ENCODE measurements at regions of chr1 and their contacts with region 1.

Region 1: DNA sequence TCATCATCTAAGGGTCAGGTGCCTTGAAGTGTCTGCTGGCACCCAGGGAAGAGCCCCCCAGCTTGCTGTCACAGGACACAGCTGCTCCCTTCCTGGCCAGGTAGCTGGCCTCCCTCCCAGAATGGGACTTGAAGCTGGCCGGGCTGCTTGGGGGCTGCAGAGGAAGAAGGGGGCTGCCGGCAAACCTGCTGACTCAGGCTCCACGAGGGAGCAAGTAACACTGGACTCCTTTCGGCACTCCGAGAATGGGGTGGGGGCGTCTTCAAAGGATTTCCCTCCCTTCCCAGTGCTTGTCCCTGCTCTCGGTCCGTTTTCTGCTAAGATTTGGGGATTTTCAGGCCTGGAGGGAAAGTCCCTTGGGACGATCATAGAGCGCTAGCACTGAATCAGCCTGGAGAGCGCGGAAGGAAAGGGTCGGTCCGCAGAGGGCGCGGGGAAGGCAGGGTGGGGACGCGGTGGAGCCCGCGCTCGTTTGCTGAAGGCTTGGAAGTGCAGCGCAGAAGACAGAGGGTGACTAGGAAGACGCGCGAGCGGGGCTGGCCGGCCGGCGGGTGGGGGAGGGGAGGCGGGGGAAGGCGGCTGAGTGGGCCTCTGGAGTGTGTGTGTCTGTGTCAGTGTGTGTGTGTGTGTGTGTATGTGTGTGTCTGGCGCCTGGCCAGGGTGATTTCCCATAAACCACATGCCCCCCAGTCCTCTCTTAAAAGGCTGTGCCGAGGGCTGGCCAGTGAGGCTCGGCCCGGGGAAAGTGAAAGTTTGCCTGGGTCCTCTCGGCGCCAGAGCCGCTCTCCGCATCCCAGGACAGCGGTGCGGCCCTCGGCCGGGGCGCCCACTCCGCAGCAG is at the start of gene CSF1:
- DNase-seq: peak; percentile 83 to 91
- ATAC-seq: peak; percentile 78
- H3K4me3 ChIP-seq: peak within 1 kb of the TSS; percentile 74 to 82
- H3K27ac ChIP-seq: peak within 1 kb of the TSS in 1 of 2 donors; percentile 49
- H3K4me1 ChIP-seq: peaks cover 0 to 3% of the 10 kb centered on the region in 2 donors
- H3K27me3 ChIP-seq: no peaks in the 10 kb centered on the region
- total RNA-seq, gene CSF1: 66.8 to 69.1 TPM

Region 2: DNA sequence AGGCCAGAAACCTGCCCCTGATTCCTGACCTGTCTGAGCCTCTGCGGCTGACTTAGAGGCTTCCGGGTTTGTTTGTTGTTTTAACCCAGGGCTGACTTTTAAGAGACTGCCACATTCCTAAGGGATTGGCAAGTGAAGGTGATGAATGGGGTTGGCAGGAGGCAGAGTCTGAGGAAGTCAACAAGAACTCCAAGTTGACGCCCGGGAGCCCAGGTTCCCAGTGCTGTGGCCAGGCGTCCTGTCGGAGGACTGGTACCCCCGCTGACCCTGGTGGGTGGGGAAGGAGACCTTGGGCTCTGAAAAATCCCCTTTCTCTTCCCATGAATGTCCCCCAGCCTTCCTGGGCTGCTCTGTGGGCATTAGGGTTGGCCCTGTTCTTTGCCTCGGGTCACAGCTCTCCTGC is 126.9 kb before region 1 on chr1:
- intact Hi-C with region 1: loop called (anchors 5 kb)
- DNase-seq: peak; percentile 81 to 86
- ATAC-seq: peak; percentile 70
- H3K4me3 ChIP-seq: no peak overlapping the region
- H3K27ac ChIP-seq: peak overlapping the region in 1 of 2 donors; percentile 60
- H3K4me1 ChIP-seq: peaks cover 0 to 4% of the 10 kb centered on the region in 2 donors
- H3K27me3 ChIP-seq: no peaks in the 10 kb centered on the region

Region 3: GRCh38 chr1:109788695-109789521 is 121.4 kb before region 1 on chr1:
- intact Hi-C with region 1: loop called (anchors 5 kb)
- DNase-seq: peak in 1 of 2 donors; percentile 72
- ATAC-seq: no peak
- H3K4me3 ChIP-seq: no peak overlapping the region
- H3K27ac ChIP-seq: no peak overlapping the region
- H3K4me1 ChIP-seq: peaks cover 0 to 4% of the 10 kb centered on the region in 2 donors
- H3K27me3 ChIP-seq: no peaks in the 10 kb centered on the region

Region 4: GRCh38 chr1:109816175-109816811 is 94.0 kb before region 1 on chr1:
- intact Hi-C with region 1: loop called (anchors 2 to 5 kb)
- DNase-seq: peak in 1 of 2 donors; percentile 74
- ATAC-seq: peak; percentile 75
- H3K4me3 ChIP-seq: no peak overlapping the region
- H3K27ac ChIP-seq: peak overlapping the region in 1 of 2 donors; percentile 88
- H3K4me1 ChIP-seq: peaks cover 0 to 4% of the 10 kb centered on the region in 2 donors
- H3K27me3 ChIP-seq: no peaks in the 10 kb centered on the region

Region 5: DNA sequence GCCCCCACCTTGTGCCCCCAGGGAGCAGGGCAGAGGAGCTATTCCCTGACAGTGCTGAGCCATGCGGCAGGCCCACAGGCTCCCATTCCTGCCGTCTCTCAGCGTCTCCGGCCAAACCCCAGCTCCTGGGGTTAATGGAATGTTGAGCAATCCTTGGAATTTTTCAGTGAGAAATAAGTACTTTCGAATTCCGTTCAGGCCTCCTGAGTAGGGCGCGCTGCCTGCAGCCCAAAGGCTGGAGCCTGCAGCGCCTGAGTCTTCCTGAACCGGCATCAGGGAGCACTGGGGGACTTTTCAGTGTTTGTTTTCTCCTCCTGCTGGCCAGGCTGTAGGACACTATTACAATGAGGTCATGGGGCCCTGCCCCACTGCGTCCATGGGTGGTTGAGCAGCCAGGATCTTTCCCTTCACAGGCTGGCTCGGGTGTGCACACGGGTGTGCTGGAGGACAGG is 33.0 kb before region 1 on chr1:
- intact Hi-C with region 1: loop called in 1 of 2 experiments (anchors 5 kb)
- DNase-seq: peak; percentile 86 to 87
- ATAC-seq: peak; percentile 91
- H3K4me3 ChIP-seq: no peak overlapping the region
- H3K27ac ChIP-seq: peak overlapping the region; percentile 53 to 95
- H3K4me1 ChIP-seq: peaks cover 0 to 4% of the 10 kb centered on the region in 2 donors
- H3K27me3 ChIP-seq: no peaks in the 10 kb centered on the region

Region 6: DNA sequence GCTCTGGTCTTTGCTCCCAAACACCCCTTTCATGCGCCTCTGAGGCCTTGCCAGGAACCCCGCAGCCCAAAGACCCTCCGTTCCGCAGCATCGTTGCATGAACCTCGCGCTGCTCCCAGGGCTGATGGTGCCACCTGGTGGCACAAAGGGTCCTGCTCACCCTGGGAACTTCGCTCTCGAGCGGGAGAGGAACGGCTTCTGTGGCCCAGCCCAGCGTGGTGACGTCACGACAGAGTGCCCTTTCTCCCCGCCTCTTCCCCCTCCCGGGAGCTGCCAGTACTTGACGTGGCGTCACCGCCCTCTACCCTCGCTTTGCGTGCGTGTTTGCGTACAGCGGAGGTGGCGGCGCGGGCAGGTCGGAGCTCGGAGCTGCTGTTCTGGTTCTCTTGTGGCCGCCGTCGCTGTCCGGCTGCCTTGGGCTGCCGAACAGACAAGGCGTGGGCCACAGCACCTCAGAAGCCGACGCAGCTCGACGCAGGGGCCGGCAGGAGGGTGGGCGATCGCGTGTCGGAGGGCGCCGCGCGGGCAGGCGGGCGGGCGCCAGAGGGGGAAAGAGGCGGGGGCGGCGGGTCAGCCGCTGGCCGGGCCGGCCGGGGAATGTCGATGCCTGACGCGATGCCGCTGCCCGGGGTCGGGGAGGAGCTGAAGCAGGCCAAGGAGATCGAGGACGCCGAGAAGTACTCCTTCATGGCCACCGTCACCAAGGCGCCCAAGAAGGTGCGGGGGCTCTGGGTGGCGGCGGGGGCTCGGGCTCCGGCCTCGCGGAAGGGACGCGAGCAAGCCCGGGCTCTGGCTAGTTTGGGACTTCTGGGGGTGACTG is 74.3 kb after region 1 on chr1 and contains the start of gene AHCYL1:
- intact Hi-C with region 1: loop called (anchors 5 kb)
- DNase-seq: peak; percentile 100
- ATAC-seq: peak; percentile 98
- H3K4me3 ChIP-seq: peak within 1 kb of the TSS; percentile 2 to 65
- H3K27ac ChIP-seq: peak within 1 kb of the TSS; percentile 32 to 82
- H3K4me1 ChIP-seq: no peaks in the 10 kb centered on the region
- H3K27me3 ChIP-seq: no peaks in the 10 kb centered on the region
- total RNA-seq, gene AHCYL1: 69.0 to 79.0 TPM

Measured in aorta (tissue), 5 donors.